Brain microvascular endothelial cell (primary cell): ENCODE measurements at regions of chr18 and their contacts with region 1.

Region 1: DNA sequence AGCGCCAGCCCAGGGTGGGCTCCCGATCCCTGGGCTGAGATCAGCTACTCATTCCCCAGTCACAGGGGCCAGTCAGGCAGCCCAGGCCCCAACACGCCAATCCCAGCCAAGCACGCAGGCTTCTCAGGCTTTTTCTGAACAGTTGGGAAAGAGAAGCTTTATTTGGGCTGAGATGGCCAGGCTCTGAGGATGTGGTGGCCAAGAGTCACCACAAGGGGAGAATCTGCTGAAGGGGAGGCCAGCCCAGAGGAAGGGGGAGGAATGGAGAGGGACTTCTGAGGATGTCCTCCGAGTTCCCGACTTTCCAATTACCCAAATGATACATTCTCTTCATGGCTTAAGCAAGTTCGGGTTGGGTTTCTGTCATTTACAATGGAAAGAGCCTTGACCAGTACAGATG is 2.8 kb upstream of the DIPK1C start:
- DNase-seq: no peak
- H3K4me3 ChIP-seq: no peak overlapping the region
- H3K27ac ChIP-seq: no peak overlapping the region
- H3K27me3 ChIP-seq: peaks cover 36% of the 10 kb centered on the region
- CTCF ChIP-seq: peak; percentile 50

Region 2: DNA sequence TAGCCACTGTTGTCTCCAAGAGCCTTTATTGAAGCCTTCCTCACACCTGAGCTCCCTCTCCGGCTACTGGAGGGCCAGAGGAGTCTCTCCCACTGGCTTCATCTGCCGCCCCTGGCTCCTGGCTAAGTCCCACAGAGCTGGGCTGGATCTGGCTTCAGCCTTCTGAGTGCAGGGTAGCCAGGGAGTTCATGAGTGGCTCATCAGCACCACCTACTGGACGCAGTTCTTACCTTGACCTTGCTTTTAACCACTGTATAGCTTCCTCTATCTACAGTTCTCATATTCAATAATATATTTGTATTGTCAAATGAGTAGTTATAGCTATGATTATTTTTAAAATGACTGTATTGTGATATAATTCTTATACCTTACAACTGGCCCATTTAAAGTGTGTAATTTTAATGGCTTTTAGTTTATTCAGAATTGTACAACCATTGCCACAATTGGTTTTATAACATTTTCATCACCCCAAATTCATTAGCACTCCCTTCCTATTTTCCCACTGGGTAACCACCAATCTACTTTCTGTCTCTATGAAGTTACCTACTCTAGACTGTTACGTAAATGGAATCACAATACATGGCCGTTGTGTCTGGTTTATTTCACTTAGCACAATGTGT is 92.2 kb after region 1 on chr18:
- in situ Hi-C with region 1: loop called (anchors 25 kb)
- DNase-seq: peak; percentile 82
- H3K4me3 ChIP-seq: no peak overlapping the region
- H3K27ac ChIP-seq: no peak overlapping the region
- H3K27me3 ChIP-seq: no peaks in the 10 kb centered on the region
- CTCF ChIP-seq: peak; percentile 87